GM10248 (cell line): ENCODE measurements at regions of chr17 and their contacts with region 1.

Region 1: DNA sequence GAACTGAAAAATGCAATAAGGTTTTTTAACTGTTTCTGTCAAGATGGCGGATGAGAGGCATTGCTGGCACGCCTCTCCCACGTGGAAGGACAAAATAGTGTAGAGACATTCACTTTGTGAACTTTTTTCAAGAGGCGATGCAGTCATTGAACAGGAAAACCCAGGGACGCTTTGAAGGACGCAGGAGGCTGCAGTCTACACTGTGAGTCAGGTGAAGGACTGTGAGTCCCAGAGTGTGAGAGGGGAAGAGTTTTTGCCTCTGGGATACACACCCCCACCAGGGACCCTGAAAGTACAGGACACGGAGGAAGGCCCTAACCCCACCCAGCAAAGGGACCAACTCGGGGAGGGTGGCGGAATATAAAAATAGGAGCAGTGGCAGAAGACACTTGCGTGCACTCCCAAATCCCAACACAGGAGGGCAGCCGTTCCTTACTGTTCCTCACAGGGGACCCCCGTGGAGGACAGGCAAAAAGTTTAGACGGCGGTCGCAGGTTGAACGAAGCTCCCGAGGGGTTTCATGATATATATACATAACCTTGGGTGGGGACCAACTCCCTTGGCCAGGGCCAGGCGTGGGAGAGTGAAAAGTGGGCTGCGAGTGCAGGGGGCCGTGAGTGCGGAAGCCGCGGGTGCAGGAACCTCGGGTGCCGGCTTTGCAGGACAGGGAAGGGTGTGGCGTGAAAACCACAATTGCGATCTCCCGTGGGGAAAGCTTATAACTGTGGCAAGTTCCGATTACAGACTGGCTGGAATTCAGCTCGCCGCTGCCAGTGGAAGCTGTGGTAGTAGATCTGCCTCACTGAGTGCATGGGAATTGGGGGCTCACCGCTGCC is 82.0 kb upstream of the ALOX12 start:
- DNase-seq: peak; percentile 69
- CTCF ChIP-seq: peak; percentile 84

Region 2: DNA sequence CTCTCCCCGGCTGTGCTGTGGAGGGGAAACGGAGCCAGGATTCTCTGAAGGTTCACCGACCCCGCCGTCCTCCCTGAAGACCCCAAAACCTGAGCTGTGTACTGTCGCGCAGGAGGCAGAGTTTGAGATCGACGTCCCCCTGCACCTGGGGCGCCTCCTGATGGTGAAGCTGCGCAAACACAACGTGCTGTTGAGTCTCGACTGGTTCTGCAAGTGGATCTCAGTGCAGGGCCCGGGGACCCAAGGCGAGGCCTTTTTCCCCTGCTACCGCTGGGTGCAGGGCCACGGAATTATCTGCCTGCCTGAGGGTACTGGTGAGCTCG is 19.7 kb before region 1 on chr17:
- CTCF ChIA-PET with region 1: interaction called, 11 read pairs
- POLR2A ChIA-PET with region 1: no interaction called
- DNase-seq: peak; percentile 45
- CTCF ChIP-seq: peak; percentile 22

Region 3: DNA sequence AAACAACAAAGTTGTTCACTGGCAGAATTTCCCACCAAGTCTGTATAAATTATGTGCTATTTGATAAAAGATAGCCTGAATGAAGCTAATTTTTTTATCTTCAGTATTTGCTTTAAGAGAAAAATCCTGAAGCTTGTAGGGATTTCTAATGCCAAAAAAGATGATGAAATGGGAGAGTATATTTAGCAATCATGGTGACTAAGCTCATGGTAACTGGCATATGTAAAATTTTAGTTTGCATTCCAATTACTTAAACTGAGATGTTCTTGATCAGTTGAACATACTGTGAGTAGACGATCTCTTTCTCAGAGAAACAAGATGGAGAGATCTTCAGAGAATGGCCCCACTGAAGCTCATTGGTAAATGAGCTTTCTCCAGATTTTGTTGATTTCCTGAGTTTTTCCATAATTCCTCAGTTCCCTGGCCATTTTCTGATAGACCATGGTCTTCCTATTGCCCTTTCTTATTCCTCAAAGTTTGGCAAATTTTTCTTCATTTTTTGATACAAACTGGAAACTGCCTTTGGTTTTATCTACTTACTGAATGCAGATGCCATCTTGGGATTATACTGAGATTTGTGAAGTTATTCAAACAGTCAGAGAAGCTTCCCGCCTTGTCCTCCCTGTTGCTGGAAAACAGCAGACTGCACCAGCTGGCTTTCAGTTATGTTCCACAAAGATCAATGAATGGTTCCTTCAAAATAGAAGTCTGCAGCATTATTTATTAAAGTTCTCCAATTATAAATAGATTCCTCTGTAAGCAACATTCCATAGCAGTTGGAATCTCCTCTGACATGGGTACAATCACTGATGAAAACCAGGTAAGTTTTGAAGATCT is 13.7 kb after region 1 on chr17:
- CTCF ChIA-PET with region 1: interaction called, 36 read pairs
- POLR2A ChIA-PET with region 1: no interaction called
- DNase-seq: no peak
- CTCF ChIP-seq: no peak

Region 4: GRCh38 chr17:6995431-6996255 is 81.8 kb after region 1 on chr17 and contains the start of gene ALOX12:
- CTCF ChIA-PET with region 1: interaction called, 193 read pairs
- POLR2A ChIA-PET with region 1: no interaction called
- DNase-seq: no peak
- CTCF ChIP-seq: no peak

Region 5: DNA sequence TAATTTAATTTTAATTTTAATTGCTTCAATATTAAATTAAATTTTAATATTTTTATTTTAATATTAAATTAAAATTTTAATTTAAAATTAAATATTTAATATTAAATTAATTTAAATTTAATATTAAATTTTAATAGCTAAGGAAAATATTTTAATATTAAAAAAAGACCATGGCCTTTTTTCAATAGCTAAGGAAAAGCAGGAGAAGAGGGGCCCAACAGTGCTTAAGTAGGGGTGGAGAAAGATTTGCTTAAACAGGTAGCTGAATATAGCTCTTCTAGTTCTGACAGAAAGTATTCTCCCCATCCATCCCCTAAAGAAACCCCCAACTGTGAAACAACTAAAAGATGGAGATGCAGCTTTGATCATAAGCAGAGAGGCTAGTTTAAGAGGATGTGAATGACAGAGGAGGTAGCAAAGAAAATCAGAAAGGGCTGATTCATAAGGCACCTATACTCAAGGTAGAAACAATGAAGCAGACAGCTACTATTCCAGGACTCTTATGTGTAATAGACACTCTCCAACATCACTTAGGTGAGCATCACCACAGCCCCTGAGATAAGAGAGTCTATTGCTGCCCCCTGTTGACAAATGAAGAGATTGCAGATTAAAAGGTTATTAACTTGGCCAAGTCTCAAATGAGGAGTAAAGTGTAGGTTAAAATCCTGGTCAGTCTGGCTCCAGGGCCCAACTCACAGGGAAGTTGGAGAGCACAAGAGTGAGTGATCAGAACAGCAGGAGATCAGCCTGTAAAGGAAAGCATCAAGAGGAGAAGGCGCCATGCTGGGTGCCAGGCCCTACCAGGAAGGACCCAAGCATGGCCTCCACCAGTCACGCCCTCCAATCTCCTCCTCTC is 90.8 kb after region 1 on chr17:
- CTCF ChIA-PET with region 1: interaction called, 193 read pairs
- POLR2A ChIA-PET with region 1: no interaction called
- DNase-seq: peak; percentile 69
- CTCF ChIP-seq: peak; percentile 59

Region 6: GRCh38 chr17:7021993-7022778 is 108.4 kb after region 1 on chr17:
- CTCF ChIA-PET with region 1: interaction called, 60 read pairs
- POLR2A ChIA-PET with region 1: no interaction called
- DNase-seq: peak; percentile 86
- CTCF ChIP-seq: peak; percentile 91

Region 7: DNA sequence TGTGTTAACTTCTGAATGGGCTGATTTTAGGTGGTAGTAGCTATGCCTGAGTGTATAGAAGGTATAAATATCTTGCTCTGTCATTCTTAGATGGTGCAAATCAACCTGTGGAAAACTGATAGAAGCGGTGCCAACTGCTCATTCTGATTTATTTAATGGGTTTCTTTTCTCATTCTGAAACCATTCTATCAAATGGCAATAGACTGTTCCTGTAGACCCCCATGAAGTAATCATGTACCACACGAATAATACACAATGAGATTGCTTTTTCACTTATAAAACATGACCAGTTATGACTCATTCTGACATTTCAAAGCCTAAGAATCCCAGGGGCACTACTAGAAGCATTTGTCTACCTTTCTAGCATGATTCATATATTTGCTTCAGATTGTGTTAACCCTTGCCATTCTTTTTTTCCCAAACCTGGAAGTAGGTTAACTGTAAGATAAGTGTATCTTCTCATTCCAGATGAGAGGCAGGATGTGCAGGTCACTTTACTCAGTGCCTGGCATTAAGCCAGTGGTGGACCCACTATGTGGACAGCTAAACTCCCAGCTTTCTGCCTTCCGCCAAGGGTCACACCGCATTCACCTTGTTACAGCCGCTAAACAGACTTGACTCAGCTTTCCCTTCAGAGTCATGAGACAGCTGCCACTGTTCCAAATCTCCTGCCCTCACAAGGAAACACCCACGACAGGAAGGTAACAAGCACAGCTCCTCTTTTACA is 146.5 kb after region 1 on chr17:
- CTCF ChIA-PET with region 1: no interaction called
- POLR2A ChIA-PET with region 1: no interaction called
- DNase-seq: no peak
- CTCF ChIP-seq: no peak